ENCODE measurements at regions of chr9 and their contacts with region 1.

Region 1: DNA sequence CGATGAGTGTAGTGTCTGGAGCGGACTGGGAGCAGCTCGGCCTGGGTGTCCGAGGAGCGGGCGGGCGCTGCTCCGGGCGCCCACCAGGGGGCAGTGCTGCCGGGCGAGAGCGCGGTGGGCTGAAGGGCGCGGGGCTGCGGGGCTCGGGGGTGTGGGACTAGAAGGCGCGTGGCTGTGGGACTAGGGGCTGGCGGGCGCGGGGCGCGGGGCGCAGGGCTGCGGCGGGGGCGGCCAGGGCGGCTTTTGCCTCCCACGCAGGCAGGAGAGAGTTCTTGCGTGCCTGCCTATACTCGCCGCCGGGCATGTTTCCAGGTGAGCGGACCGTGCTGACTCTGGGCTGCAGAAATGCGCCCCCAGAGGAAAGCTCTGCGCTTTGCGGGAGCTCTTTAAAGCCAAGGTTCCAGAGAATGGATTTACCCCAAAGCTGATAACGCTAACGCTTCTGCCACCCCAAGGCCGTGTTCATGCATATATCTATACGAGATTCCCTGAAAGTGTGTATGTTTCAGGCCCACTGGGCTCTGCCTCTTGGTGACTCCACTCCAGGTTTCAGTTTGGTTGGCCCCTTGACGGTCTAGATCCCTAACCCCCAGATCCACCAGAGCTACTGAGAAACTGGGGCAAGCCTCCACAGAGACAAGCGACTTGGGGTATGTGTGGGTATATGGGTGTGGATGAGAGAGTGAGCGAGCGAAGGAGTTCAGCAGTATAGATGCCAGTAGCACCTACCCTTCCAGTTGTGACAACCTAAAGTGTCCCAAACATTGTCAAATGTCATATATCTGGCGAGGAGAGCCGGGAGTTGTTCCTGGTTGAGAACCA is 56.2 kb downstream of the ACER2 start:
- DNase-seq: peak; percentile 79 to 92
- ATAC-seq: peak; percentile 91 to 97
- H3K4me3 ChIP-seq: peak overlapping the region; percentile 48
- H3K27ac ChIP-seq: peak overlapping the region; percentile 68 to 95
- H3K4me1 ChIP-seq: no peaks in the 10 kb centered on the region
- CTCF ChIP-seq: peak; percentile 90
- EP300 ChIP-seq: no peak
- POLR2A ChIP-seq: no peak
- RAD21 ChIP-seq: peak; percentile 25 to 57; a peak in 4 of 5 replicates

Region 2: DNA sequence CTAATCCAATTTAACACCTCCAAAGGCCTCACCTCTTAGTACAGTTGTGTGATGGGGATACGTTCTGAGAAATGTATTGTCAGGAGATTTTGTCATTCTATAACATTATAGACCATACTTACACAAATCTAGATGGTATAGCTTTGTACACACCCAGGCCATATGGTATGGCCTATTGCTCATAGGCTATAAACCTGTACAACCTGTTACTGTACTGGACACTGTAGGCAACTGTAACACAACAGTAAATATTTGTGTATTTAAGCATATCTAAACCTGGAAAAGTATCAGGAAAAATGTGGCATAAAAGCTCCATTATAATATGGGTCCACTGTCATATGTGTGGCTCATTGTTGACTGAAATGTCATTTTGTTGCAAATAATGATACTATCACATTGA is 44.1 kb before region 1 on chr9:
- CTCF ChIA-PET with region 1: interaction called, 12 read pairs
- POLR2A ChIA-PET with region 1: no interaction called
- DNase-seq: no peak
- ATAC-seq: no peak
- H3K4me3 ChIP-seq: no peak overlapping the region
- H3K27ac ChIP-seq: no peak overlapping the region
- H3K4me1 ChIP-seq: no peaks in the 10 kb centered on the region
- CTCF ChIP-seq: no peak
- EP300 ChIP-seq: no peak
- POLR2A ChIP-seq: no peak
- RAD21 ChIP-seq: no peak

Region 3: GRCh38 chr9:19441730-19442129 is 23.2 kb before region 1 on chr9:
- CTCF ChIA-PET with region 1: interaction called, 12 read pairs
- POLR2A ChIA-PET with region 1: no interaction called
- DNase-seq: no peak
- ATAC-seq: no peak
- H3K4me3 ChIP-seq: no peak overlapping the region
- H3K27ac ChIP-seq: no peak overlapping the region
- H3K4me1 ChIP-seq: no peaks in the 10 kb centered on the region
- CTCF ChIP-seq: no peak
- EP300 ChIP-seq: no peak
- POLR2A ChIP-seq: no peak
- RAD21 ChIP-seq: no peak

Region 4: DNA sequence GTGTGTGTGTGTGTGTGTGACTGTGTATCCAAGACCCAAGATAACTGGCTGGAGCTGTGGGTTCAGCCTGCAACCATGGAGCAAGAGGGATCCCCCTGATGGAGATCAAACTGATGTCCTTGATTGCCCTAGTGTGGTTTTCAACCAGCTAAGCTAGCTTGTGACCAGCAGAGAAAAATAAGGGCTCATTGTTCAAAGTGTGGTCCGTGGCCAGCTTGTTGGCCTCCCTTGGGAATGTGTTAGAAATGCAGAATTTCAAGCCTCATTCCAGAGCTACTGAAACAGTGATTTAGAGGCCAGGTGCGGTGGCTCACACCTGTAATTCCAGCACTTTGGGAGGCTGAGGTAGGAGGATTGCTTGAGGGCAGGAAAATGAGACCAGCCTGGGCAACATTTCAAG is 23.7 kb after region 1 on chr9:
- CTCF ChIA-PET with region 1: interaction called, 28 read pairs
- POLR2A ChIA-PET with region 1: no interaction called
- DNase-seq: no peak
- ATAC-seq: no peak
- H3K4me3 ChIP-seq: no peak overlapping the region
- H3K27ac ChIP-seq: no peak overlapping the region
- H3K4me1 ChIP-seq: 0 out of 3 replicates have a peak, but pooled peaks cover 3% of the 10 kb centered on the region
- CTCF ChIP-seq: no peak
- EP300 ChIP-seq: no peak
- POLR2A ChIP-seq: no peak
- RAD21 ChIP-seq: no peak

Region 5: GRCh38 chr9:19527663-19528062 is 62.7 kb after region 1 on chr9:
- CTCF ChIA-PET with region 1: no interaction called
- POLR2A ChIA-PET with region 1: no interaction called
- DNase-seq: no peak
- ATAC-seq: no peak
- H3K4me3 ChIP-seq: no peak overlapping the region
- H3K27ac ChIP-seq: no peak overlapping the region
- H3K4me1 ChIP-seq: no peaks in the 10 kb centered on the region
- CTCF ChIP-seq: no peak
- EP300 ChIP-seq: no peak
- POLR2A ChIP-seq: no peak
- RAD21 ChIP-seq: no peak

Region 6: GRCh38 chr9:19550009-19550408 is 85.0 kb after region 1 on chr9:
- CTCF ChIA-PET with region 1: no interaction called
- POLR2A ChIA-PET with region 1: no interaction called
- DNase-seq: no peak
- ATAC-seq: no peak
- H3K4me3 ChIP-seq: no peak overlapping the region
- H3K27ac ChIP-seq: no peak overlapping the region
- H3K4me1 ChIP-seq: no peaks in the 10 kb centered on the region
- CTCF ChIP-seq: no peak
- EP300 ChIP-seq: no peak
- POLR2A ChIP-seq: no peak
- RAD21 ChIP-seq: no peak

Region 7: DNA sequence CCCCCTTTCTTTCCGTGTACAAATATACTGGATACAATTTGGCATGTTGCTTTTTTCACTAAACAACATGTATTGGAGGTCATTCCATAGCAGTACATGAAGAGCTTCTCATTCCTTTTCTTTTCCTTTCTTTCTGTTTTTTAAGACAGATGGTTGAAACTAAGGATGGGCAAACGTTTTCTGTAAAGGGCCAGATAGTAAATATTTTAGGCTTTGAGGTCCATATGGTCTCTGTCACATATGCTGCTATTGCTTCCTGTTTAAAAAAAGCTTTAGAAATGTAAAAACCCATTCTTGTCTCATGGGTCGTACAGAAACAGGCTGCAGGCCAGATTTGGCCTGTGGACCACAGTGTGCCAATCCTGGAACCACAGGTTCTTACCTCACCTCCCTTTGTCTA is 104.0 kb after region 1 on chr9:
- CTCF ChIA-PET with region 1: no interaction called
- POLR2A ChIA-PET with region 1: no interaction called
- DNase-seq: no peak
- ATAC-seq: no peak
- H3K4me3 ChIP-seq: no peak overlapping the region
- H3K27ac ChIP-seq: no peak overlapping the region
- H3K4me1 ChIP-seq: no peaks in the 10 kb centered on the region
- CTCF ChIP-seq: no peak
- EP300 ChIP-seq: no peak
- POLR2A ChIP-seq: no peak
- RAD21 ChIP-seq: no peak

Measured in A549 (cell line).